Activated T-helper 1 cell treated with anti-CD3 and anti-CD28 coated beads, Interleukin-12 subunit alpha, Interleukin-12 subunit beta, Interleukin-2, Interleukin-4 antibody, amounts not matched to agents 30 ng/mL and 10 ng/mL and 1 ng/mL, durations not matched to agents 14 hours and 24 hours and 36 hours (primary cell): ENCODE measurements at regions of chr10 and their contacts with region 1.

Region 1: GRCh38 chr10:19480353-19480752 is 335.9 kb upstream of the PLXDC2 start:
- DNase-seq: no peak
- H3K4me3 Mint-ChIP-seq: no peak overlapping the region
- H3K27ac Mint-ChIP-seq: no peak overlapping the region
- H3K4me1 Mint-ChIP-seq: no peaks in the 10 kb centered on the region
- H3K27me3 Mint-ChIP-seq: no peaks in the 10 kb centered on the region

Region 2: GRCh38 chr10:18368682-18369081 is 1111.7 kb before region 1 on chr10:
- intact Hi-C with region 1: loop called (anchors 5 kb)
- DNase-seq: no peak
- H3K4me3 Mint-ChIP-seq: no peak overlapping the region
- H3K27ac Mint-ChIP-seq: no peak overlapping the region
- H3K4me1 Mint-ChIP-seq: no peaks in the 10 kb centered on the region
- H3K27me3 Mint-ChIP-seq: peaks cover 2% of the 10 kb centered on the region